Endothelial cell of umbilical vein (primary cell): ENCODE measurements at regions of chr3 and their contacts with region 1.

Region 1: GRCh38 chr3:186930641-186931531 is 560 bp downstream of the ST6GAL1 start:
- DNase-seq: peak; percentile 81
- H3K4me3 ChIP-seq: peak overlapping the region; percentile 66 to 96 (median 83)
- H3K27ac ChIP-seq: peak overlapping the region; percentile 53
- H3K4me1 ChIP-seq: peaks cover 26% of the 10 kb centered on the region
- H3K27me3 ChIP-seq: no peaks in the 10 kb centered on the region
- CTCF ChIP-seq: peak in 1 of 2 donors; percentile 20
- POLR2A ChIP-seq: no peak

Region 2: GRCh38 chr3:186570096-186570940 is 360.6 kb before region 1 on chr3 and contains the start of gene DNAJB11:
- CTCF ChIA-PET with region 1: no interaction called
- POLR2A ChIA-PET with region 1: no interaction called
- dilution Hi-C with region 1: no loop called
- intact Hi-C with region 1: loop called (anchors 5 kb)
- DNase-seq: peak; percentile 100
- H3K4me3 ChIP-seq: peak within 1 kb of the TSS; percentile 80 to 91 (median 90)
- H3K27ac ChIP-seq: peak within 1 kb of the TSS; percentile 67
- H3K4me1 ChIP-seq: peaks cover 18% of the 10 kb centered on the region
- H3K27me3 ChIP-seq: no peaks in the 10 kb centered on the region
- CTCF ChIP-seq: no peak
- POLR2A ChIP-seq: peak; percentile 87
- total RNA-seq, gene DNAJB11: 87.6 and 100 TPM in 2 replicates

Region 3: GRCh38 chr3:186759231-186759930 is 171.5 kb before region 1 on chr3:
- CTCF ChIA-PET with region 1: no interaction called
- POLR2A ChIA-PET with region 1: no interaction called
- dilution Hi-C with region 1: no loop called
- intact Hi-C with region 1: no loop called
- DNase-seq: no peak
- H3K4me3 ChIP-seq: no peak overlapping the region
- H3K27ac ChIP-seq: no peak overlapping the region
- H3K4me1 ChIP-seq: no peaks in the 10 kb centered on the region
- H3K27me3 ChIP-seq: no peaks in the 10 kb centered on the region
- CTCF ChIP-seq: no peak
- POLR2A ChIP-seq: no peak

Region 4: DNA sequence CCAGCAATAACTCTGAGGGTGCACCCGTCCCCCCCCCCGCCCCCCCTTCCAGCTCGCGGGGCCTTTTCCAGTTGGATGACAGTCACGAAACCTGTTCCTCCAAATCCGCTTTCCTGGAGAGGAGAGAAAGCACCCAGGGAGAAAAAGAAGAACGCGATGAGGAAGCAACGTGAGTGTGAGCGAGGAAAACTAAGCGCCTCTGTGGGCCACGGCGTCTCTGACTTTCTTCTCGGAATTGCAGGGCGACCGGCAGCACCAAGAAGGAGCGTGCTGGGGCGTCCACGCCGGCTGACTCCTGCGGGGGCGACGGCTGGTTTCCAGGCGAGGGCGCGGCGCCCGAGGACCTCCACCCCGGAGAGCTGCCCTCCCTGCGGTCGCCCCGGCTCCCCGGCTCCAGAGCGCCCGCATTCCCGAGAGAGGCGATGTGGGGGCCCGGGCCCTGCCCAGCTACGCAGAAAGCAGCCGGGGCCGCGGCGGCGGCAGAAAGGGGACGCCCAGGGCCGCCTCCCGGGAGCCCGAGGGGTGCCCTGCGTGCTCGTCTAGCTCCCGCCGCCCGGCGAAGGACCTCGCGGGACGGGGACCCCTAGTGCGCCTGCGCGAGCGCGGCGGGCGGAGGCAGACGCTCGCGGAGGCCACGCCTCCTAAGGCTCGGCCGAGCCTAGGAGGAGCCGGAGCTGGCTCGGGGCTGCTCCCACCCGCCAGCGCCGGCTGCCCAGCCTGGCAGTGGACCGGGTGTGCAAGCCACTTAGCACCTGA is 103.7 kb before region 1 on chr3:
- CTCF ChIA-PET with region 1: interaction called, 7 read pairs
- POLR2A ChIA-PET with region 1: no interaction called
- dilution Hi-C with region 1: no loop called
- intact Hi-C with region 1: loop called (anchors 1 kb)
- DNase-seq: peak; percentile 78
- H3K4me3 ChIP-seq: peak overlapping the region; percentile 28 to 69 (median 52)
- H3K27ac ChIP-seq: no peak overlapping the region
- H3K4me1 ChIP-seq: peaks cover 6% of the 10 kb centered on the region
- H3K27me3 ChIP-seq: peaks cover 30 to 37% of the 10 kb centered on the region in 2 experiments
- CTCF ChIP-seq: no peak
- POLR2A ChIP-seq: peak; percentile 82

Region 5: GRCh38 chr3:186888569-186888968 is 42.3 kb before region 1 on chr3:
- CTCF ChIA-PET with region 1: no interaction called
- POLR2A ChIA-PET with region 1: no interaction called
- dilution Hi-C with region 1: no loop called
- intact Hi-C with region 1: loop called (anchors 5 kb)
- DNase-seq: peak; percentile 86
- H3K4me3 ChIP-seq: no peak overlapping the region
- H3K27ac ChIP-seq: no peak overlapping the region
- H3K4me1 ChIP-seq: peaks cover 1% of the 10 kb centered on the region
- H3K27me3 ChIP-seq: no peaks in the 10 kb centered on the region
- CTCF ChIP-seq: no peak
- POLR2A ChIP-seq: no peak

Region 6: DNA sequence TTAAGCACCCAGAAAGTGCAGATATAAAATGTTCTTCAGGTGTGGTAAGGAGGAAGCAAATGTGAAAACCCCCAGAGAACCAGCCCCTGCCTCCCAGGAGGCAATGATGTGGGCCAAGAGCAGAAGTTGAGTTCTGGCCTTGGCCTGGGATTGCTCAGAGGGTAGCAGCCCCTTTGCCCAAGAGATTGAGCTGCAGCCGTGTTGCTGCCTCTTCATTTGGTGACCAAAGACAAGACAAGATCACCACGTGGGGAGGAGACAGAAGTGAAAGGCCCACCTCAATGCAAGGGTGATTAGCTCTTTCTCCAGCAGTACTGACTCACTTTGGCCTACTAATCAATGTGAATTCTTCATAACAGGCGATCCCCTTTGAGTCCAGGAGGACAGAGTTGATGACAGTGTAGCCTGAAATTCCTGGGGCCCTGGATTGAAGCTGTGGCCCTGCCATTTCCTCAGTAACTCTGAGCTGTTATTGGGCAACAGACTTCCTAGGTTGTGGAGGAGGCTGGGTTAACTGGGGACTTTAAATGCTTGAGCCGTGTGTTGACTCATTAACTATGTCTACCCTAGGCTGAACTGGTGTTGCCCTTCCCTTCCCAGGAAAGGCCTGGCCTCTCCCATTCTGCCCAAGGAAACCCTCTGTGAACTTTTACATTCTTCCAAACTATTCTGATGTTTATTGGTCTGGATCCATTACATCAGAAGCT is 85.9 kb after region 1 on chr3:
- CTCF ChIA-PET with region 1: no interaction called
- POLR2A ChIA-PET with region 1: no interaction called
- dilution Hi-C with region 1: no loop called
- intact Hi-C with region 1: loop called (anchors 2 kb)
- DNase-seq: peak; percentile 92
- H3K4me3 ChIP-seq: no peak overlapping the region
- H3K27ac ChIP-seq: peak overlapping the region; percentile 43
- H3K4me1 ChIP-seq: peaks cover 59% of the 10 kb centered on the region
- H3K27me3 ChIP-seq: no peaks in the 10 kb centered on the region
- CTCF ChIP-seq: no peak
- POLR2A ChIP-seq: peak; percentile 27

Region 7: DNA sequence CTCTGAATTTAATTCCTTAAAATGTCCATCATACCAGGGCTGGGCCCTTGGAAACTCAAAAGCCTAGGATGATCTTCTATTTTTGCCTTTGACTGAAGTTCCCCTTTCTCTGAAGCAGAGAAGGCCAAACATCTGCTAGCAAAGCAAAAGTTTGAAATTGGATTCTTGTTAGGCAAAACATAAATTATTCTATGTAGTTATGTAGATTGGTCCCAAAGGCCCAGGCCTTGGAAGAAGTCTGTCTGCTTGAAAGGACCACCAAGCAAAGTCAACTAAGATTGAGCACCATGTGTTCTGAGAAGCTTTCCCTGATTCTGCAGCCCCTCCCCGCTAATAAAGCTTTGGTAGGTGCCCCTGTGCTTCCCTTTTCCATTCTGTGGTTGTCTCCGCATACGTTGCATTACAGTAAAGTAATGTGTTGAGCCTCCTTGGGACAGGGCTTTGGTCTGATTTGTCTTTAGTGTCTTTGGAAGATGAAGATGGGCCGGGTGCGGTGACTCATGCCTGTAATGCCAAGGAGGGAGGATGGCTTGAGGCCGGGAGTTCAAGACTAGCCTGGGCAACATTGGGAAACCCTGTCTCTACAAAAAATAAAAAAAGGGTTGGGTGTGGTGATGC is 152.0 kb after region 1 on chr3:
- CTCF ChIA-PET with region 1: no interaction called
- POLR2A ChIA-PET with region 1: no interaction called
- dilution Hi-C with region 1: no loop called
- intact Hi-C with region 1: loop called (anchors 1 kb)
- DNase-seq: no peak
- H3K4me3 ChIP-seq: no peak overlapping the region
- H3K27ac ChIP-seq: no peak overlapping the region
- H3K4me1 ChIP-seq: peaks cover 14% of the 10 kb centered on the region
- H3K27me3 ChIP-seq: no peaks in the 10 kb centered on the region
- CTCF ChIP-seq: no peak
- POLR2A ChIP-seq: no peak

Region 8: GRCh38 chr3:187150599-187150998 is 219.7 kb after region 1 on chr3:
- CTCF ChIA-PET with region 1: no interaction called
- POLR2A ChIA-PET with region 1: no interaction called
- dilution Hi-C with region 1: no loop called
- intact Hi-C with region 1: loop called (anchors 1 kb)
- DNase-seq: peak; percentile 16
- H3K4me3 ChIP-seq: no peak overlapping the region
- H3K27ac ChIP-seq: no peak overlapping the region
- H3K4me1 ChIP-seq: no peaks in the 10 kb centered on the region
- H3K27me3 ChIP-seq: peaks cover 2 to 7% of the 10 kb centered on the region in 2 experiments
- CTCF ChIP-seq: peak; percentile 10 to 22
- POLR2A ChIP-seq: no peak

Region 9: DNA sequence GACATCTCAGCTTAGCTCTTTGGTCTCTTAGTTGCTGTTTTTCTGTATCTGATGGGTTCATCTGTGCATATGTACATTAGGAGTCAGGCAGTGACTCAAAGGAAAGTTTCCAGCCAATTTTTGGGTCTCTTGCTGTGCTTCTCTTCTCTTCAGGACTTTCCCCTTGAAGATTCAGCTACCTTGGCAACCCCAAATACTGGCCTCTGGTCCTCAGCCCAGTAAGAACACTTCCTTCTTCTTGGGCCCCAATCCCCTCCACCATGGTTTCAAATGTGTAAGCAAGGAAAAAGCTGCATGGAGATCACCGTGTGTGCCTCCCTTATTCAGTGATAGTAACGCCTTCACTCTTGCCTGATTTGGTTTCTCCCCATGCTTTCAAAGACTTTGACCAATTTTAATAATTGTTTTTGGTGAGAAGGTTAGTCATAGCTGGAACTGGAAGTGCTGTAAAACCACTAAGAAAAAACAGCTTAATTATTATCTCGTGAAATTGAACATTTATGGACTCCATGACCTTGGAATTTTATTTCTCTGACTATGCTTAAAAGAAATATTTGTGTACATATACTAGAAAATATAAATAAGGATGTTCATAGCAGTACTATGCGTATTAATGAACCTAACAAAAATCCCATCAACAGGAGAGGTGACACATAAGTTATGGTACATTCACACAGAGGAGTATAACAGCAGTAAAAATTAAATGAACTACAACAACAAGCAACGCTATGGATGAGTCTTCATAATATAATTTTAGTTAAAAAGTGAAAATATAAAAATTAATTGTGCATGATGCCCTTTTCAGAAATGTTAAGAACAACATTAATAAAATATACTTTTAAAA is 939.7 kb after region 1 on chr3:
- CTCF ChIA-PET with region 1: no interaction called
- POLR2A ChIA-PET with region 1: no interaction called
- dilution Hi-C with region 1: no loop called
- intact Hi-C with region 1: no loop called
- DNase-seq: no peak
- H3K4me3 ChIP-seq: no peak overlapping the region
- H3K27ac ChIP-seq: no peak overlapping the region
- H3K4me1 ChIP-seq: no peaks in the 10 kb centered on the region
- H3K27me3 ChIP-seq: no peaks in the 10 kb centered on the region
- CTCF ChIP-seq: no peak
- POLR2A ChIP-seq: no peak